A549 (cell line): ENCODE measurements at regions of chr17 and their contacts with region 1.

Region 1: GRCh38 chr17:18248300-18248731 is 10.2 kb downstream of the FLII start:
- DNase-seq: peak; percentile 83 to 98
- ATAC-seq: peak; percentile 73 to 87
- H3K4me3 ChIP-seq: no peak overlapping the region
- H3K27ac ChIP-seq: 0 out of 6 replicates have a peak overlapping the region, but pooled peaks of 1 of the 2 experiments have one; percentile 10
- H3K4me1 ChIP-seq: peaks cover 10% of the 10 kb centered on the region; the same call in 2 of the 3 replicates
- CTCF ChIP-seq: peak; percentile 86
- EP300 ChIP-seq: no peak
- POLR2A ChIP-seq: no peak
- RAD21 ChIP-seq: peak; percentile 85 to 88

Region 2: DNA sequence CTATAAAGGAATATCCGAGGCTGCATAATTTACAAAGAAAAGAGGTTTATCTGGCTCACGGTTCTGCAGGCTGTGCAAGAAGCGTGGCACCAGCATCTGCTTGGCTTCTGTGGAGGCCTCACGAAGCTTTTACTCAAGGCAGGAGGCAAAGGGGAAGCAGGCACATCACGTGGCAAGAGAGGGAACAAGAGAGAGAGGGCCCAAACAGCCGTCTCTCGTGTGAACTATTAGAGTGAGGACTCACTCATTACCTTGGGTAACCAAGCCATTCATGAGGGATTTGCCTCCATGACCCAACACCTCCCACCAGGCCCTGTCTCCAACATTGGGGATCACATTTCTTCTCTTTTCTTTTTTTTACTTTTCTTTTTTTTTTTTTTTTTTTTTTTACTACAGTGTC is 72.1 kb before region 1 on chr17:
- CTCF ChIA-PET with region 1: no interaction called
- POLR2A ChIA-PET with region 1: no interaction called
- DNase-seq: no peak
- ATAC-seq: no peak
- H3K4me3 ChIP-seq: no peak overlapping the region
- H3K27ac ChIP-seq: no peak overlapping the region
- H3K4me1 ChIP-seq: no peaks in the 10 kb centered on the region
- CTCF ChIP-seq: no peak
- EP300 ChIP-seq: no peak
- POLR2A ChIP-seq: no peak
- RAD21 ChIP-seq: no peak

Region 3: DNA sequence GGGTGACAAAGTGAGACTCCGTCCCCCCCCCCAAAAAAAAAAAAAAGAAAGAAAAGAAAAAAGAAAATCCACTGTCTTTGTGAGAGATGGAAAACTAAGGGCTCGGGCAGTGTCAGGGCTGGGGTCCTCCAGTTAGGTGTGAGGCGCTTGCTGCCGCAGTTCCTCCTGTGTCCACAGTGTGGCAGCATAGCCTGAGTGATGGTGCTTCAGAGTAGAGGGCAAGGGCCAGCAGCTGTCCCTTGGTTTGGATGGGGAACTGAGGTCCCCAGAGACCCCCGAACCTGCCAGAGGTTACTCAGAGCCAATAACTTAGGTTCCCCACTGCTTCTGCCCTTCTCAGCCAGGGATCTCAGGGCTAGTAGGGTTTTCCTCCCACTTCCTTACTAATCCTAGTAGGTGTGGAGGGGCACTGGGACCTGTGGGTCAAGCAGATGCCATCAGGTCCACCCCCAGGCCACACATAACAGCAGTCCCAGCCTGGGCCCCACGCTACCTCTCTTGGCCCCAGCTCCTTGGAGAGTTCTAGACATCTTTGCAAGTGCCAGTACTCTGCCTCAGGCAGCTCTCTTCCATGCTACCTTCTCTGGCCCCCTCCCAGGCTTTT is 30.8 kb before region 1 on chr17:
- CTCF ChIA-PET with region 1: interaction called, 30 read pairs
- POLR2A ChIA-PET with region 1: no interaction called
- DNase-seq: peak; percentile 71 to 97
- ATAC-seq: peak; percentile 87 to 95
- H3K4me3 ChIP-seq: no peak overlapping the region
- H3K27ac ChIP-seq: no peak overlapping the region
- H3K4me1 ChIP-seq: peaks cover 7% of the 10 kb centered on the region; the same call in 2 of the 3 replicates
- CTCF ChIP-seq: peak; percentile 85
- EP300 ChIP-seq: no peak
- POLR2A ChIP-seq: no peak
- RAD21 ChIP-seq: peak; percentile 84 to 93

Region 4: DNA sequence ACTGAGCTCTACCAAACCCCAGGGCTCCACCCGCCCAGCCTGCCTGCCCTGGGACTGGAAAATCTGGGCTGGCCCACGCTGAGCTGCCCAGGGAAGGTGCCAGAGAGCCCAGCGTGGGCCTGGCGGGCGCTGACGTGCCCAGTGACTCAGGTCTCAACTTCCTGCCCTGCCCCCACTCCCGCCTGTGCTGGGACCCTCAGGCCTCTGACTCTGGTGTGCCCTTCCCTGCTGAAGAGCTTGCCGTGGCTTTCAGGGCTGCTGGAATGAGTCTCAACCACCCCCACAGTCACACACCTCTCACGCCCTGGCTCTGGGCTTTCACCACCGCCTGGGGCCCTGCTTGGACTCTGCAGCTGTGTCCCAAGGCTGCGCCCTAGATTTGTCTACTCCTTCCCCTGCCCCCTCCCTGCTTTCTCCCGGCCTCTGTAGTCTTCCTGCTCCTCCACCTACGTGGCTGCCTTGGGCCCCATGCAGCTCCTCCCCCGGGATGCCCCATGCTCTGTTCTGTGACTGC is 12.5 kb before region 1 on chr17:
- CTCF ChIA-PET with region 1: interaction called, 103 read pairs
- POLR2A ChIA-PET with region 1: no interaction called
- DNase-seq: no peak
- ATAC-seq: peak in 1 of 2 experiments; percentile 15; a peak in 3 of 6 replicates
- H3K4me3 ChIP-seq: no peak overlapping the region
- H3K27ac ChIP-seq: peak overlapping the region in 1 of 2 experiments; percentile 52; a peak in 2 of 6 replicates
- H3K4me1 ChIP-seq: peaks cover 6% of the 10 kb centered on the region; the same call in 1 of the 3 replicates
- CTCF ChIP-seq: no peak
- EP300 ChIP-seq: no peak
- POLR2A ChIP-seq: no peak
- RAD21 ChIP-seq: no peak

Region 5: DNA sequence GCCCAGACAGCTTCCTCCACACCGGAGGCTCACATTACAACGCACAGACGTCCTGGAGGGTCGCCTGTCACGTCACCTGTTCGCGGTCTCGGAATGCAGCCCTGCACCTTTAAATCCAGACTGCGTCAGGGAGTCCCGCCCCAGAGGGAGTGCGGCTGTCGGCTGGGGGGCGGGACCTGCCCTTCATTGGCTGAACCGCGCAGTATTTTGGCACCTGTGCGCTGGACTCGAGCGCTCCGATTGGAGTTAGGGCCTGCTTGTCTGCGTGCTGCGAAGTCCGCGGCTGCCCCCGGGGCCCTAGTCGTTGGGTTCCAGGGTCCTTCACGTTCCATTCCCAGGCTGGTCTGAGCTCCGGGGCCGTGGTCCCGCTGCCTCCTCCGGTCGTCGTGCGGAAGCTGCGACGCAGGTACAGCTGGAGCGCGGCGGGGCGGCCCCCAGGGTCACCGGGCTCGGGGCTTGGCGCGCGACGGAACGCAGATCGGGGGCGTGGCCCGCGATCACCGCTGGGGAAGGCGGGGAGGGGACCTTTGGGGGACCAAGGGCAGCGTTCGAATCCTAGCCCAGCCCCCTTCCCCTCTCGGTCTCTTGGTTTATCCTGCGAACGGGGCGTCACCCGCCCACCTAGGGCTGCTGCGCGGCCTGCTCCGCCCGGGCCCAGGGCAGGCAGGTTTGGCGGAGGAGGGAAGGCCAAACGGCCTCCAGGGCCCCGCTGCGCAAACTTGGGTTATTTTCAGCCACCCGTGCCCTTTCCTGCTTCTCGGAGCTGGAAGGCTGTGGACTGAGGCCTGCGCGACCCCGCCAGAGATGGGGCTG is 12.2 kb after region 1 on chr17 and contains the start of gene MIEF2:
- CTCF ChIA-PET with region 1: interaction called, 59 read pairs
- POLR2A ChIA-PET with region 1: interaction called, 3 read pairs
- DNase-seq: peak; percentile 96 to 100
- ATAC-seq: peak; percentile 72 to 88
- H3K4me3 ChIP-seq: peak within 1 kb of the TSS; percentile 76
- H3K27ac ChIP-seq: peak within 1 kb of the TSS; percentile 84 to 91
- H3K4me1 ChIP-seq: peaks cover 31% of the 10 kb centered on the region
- CTCF ChIP-seq: no peak
- EP300 ChIP-seq: no peak
- POLR2A ChIP-seq: peak; percentile 51
- RAD21 ChIP-seq: no peak
- polyA plus RNA-seq, gene MIEF2: 3.7 and 4.3 TPM in 2 replicates

Region 6: DNA sequence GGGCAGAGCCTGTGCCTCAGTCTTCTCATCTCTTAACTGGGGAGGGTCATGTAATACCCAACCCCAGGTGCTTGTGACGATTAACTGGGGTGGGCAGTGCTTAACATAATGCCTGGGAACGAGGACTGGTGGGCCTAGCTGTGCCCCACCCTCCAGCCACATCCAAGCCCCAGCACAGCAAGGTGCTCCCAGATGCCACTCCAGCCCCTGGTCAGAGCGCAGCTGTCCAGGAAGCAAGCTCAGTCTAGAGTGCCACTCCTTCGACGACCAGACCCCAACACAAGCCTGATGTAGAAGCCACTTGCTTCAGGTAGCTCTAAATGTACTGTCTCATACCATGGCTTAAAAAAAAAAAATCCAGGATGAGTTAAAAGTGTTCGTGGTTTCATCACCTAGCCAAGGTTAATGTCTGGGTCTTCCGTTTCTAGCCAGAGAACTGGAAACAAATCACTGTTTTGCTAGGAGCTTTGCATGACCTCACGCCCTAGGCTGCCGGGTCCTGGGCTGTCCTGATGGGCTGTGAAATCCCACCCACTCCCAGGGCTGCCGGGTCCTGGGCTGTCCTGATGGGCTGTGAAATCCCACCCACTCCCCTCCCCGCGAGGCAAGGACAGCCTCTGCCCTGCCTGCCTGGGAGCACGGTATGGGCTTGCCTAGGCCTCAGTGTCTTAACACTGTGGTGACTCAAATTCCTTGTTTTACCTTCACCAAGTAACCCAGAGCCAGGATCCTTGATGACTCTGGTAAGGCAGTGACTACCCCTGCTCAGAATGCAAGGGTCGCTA is 19.8 kb after region 1 on chr17:
- CTCF ChIA-PET with region 1: interaction called, 59 read pairs
- POLR2A ChIA-PET with region 1: no interaction called
- DNase-seq: no peak
- ATAC-seq: peak; percentile 3 to 31; a peak in 3 of 6 replicates
- H3K4me3 ChIP-seq: no peak overlapping the region
- H3K27ac ChIP-seq: no peak overlapping the region
- H3K4me1 ChIP-seq: no peaks in the 10 kb centered on the region
- CTCF ChIP-seq: no peak
- EP300 ChIP-seq: no peak
- POLR2A ChIP-seq: no peak
- RAD21 ChIP-seq: no peak

Region 7: GRCh38 chr17:18280766-18281371 is 32.6 kb after region 1 on chr17:
- CTCF ChIA-PET with region 1: interaction called, 16 read pairs
- POLR2A ChIA-PET with region 1: no interaction called
- DNase-seq: no peak
- ATAC-seq: no peak
- H3K4me3 ChIP-seq: no peak overlapping the region
- H3K27ac ChIP-seq: no peak overlapping the region
- H3K4me1 ChIP-seq: peaks cover 3% of the 10 kb centered on the region; the same call in 1 of the 3 replicates
- CTCF ChIP-seq: no peak
- EP300 ChIP-seq: no peak
- POLR2A ChIP-seq: no peak
- RAD21 ChIP-seq: no peak

Region 8: GRCh38 chr17:18319604-18320256 is 71.4 kb after region 1 on chr17:
- CTCF ChIA-PET with region 1: interaction called, 10 read pairs
- POLR2A ChIA-PET with region 1: no interaction called
- DNase-seq: peak; percentile 37 to 63
- ATAC-seq: peak; percentile 42 to 48
- H3K4me3 ChIP-seq: no peak overlapping the region
- H3K27ac ChIP-seq: no peak overlapping the region
- H3K4me1 ChIP-seq: peaks cover 28% of the 10 kb centered on the region; the same call in 2 of the 3 replicates
- CTCF ChIP-seq: peak; percentile 41; the same call in 2 of the 3 replicates
- EP300 ChIP-seq: no peak
- POLR2A ChIP-seq: no peak
- RAD21 ChIP-seq: peak; percentile 63 to 66